MCF 10A (cell line): ENCODE measurements at regions of chr6 and their contacts with region 1.

Region 1: GRCh38 chr6:54916862-54917261 is 70.3 kb downstream of the FAM83B start:
- DNase-seq: peak; percentile 74
- H3K4me3 Mint-ChIP-seq: no peak overlapping the region
- H3K27ac Mint-ChIP-seq: no peak overlapping the region
- H3K4me1 Mint-ChIP-seq: peaks cover 16% of the 10 kb centered on the region
- H3K27me3 Mint-ChIP-seq: no peaks in the 10 kb centered on the region
- CTCF ChIP-seq: no peak

Region 2: GRCh38 chr6:54892831-54893230 is 24.0 kb before region 1 on chr6:
- CTCF ChIA-PET with region 1: no interaction called
- POLR2A ChIA-PET with region 1: interaction called, 4 read pairs
- intact Hi-C with region 1: loop called (anchors 1 kb)
- DNase-seq: peak; percentile 70
- H3K4me3 Mint-ChIP-seq: no peak overlapping the region
- H3K27ac Mint-ChIP-seq: no peak overlapping the region
- H3K4me1 Mint-ChIP-seq: peaks cover 25% of the 10 kb centered on the region
- H3K27me3 Mint-ChIP-seq: no peaks in the 10 kb centered on the region
- CTCF ChIP-seq: no peak